Right ventricle myocardium inferior (tissue), 1 donor: ENCODE measurements at regions of chr5 and their contacts with region 1.

Region 1: DNA sequence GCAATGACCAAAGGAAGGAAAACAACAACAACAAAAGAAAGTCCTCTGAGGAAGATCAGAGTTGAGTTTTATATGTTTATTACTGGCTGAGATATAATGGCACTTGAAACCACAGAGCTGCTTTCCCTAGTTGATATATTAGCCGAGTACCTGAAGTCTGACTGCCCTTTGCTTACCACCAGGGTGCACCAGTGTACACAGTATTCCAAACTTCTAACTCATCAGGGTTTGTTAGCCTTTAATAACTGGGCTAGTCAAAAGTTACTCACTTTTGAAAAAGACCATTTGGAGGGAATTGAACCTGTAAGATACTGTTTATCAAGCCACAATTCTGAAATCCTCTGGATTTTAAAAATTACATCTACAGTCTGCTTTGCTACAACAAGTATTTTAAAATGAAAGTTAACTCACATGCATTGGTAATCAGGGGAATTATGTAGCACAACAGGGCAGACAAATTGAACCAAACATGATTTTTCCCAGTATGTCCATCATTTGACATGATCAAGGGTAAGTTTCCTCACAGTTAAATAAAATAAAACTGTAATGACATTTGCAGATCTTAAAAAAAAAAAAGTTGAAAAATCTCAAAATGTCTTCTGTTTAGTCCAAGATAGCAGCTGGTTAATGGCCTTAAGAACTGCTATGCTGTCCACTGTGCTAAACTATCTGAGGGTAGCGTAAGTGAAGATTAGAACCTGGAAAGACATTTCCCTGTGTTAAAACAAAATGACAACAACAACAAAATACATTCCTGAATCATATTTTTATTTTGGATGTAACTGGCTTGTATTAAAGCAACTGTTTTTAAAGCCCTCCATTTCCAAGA is 57.3 kb upstream of the C6 start:
- DNase-seq: no peak
- ATAC-seq: peak; percentile 94

Region 2: DNA sequence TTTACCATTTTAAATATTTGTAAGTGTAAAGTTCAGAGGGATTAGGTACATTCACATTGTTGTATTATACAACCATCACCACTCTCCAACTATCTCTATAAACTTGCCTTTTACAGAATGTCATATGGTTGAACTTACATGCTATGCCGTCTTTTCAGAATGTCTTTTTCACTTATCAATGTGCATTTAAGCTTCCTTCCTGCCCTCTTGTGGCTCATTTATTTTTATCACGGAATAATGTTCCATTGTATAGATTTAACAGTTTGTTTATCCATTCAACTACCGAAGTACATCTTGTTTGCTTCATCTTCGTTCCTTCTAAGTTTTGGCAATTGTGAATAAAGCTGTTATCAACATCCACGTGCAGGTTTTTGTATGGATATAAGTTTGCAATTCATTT is 76.0 kb after region 1 on chr5:
- intact Hi-C with region 1: loop called (anchors 5 kb)
- DNase-seq: no peak
- ATAC-seq: no peak

Region 3: DNA sequence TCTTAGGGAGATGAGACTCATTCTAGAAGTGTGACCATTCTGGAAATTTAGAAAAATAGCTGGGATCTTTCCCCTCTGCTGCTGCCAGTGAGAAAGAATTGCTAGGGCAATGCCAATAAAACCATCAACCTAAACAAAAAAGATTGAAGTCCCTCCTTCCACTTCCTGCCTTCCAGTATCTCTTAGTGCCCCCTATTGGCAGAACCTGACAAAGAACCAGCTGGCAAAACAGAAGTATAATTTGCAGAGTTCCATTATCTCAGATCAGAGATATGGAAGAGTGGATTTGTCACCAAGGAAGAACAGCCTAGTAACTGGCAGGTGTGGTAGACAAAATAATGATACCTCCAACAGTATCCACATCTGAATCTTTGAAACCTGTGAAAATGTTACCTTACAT is 253.5 kb after region 1 on chr5:
- intact Hi-C with region 1: loop called (anchors 1 kb)
- DNase-seq: no peak
- ATAC-seq: no peak

Region 4: DNA sequence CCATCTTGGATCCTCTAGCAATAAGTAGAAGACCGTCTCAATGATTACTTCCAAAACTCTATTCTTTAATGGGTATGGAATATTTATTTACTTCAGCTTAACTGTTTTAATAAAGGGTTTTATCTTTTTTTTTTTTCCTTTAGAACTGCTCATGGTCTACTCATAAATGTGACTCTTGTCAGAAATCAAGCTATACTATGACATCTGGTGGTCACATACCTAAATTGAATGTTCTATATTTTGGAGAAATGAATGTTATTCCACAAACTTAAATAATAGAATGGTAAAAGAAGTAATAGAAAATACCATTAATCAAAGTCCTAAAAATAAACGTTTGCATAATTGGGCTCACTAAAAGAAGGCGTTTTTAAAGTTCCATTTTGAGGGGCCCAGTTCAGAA is 371.0 kb after region 1 on chr5:
- intact Hi-C with region 1: loop called (anchors 5 kb)
- DNase-seq: no peak
- ATAC-seq: no peak